CD14-positive monocyte (primary cell): ENCODE measurements at regions of chr12 and their contacts with region 1.

Region 1: GRCh38 chr12:4148418-4149056 is 125.0 kb upstream of the CCND2 start:
- DNase-seq: peak; percentile 87 to 95 (median 92)
- H3K4me3 ChIP-seq: no peak overlapping the region
- H3K4me3 Mint-ChIP-seq: peak overlapping the region in 1 of 2 donors; percentile 39
- H3K27ac ChIP-seq: no peak overlapping the region
- H3K27ac Mint-ChIP-seq: peak overlapping the region; percentile 61 to 84 (median 75)
- H3K4me1 ChIP-seq: peaks cover 44 to 49% of the 10 kb centered on the region in 2 donors
- H3K4me1 Mint-ChIP-seq: peaks cover 50% of the 10 kb centered on the region
- H3K27me3 ChIP-seq: no peaks in the 10 kb centered on the region
- H3K27me3 Mint-ChIP-seq: peaks cover 2 to 14% (median 2%) of the 10 kb centered on the region in 3 donors
- CTCF ChIP-seq: no peak

Region 2: GRCh38 chr12:4107436-4107878 is 41.1 kb before region 1 on chr12:
- intact Hi-C with region 1: loop called in 1 of 2 experiments (anchors 5 kb)
- DNase-seq: peak; percentile 82 to 93 (median 89)
- H3K4me3 ChIP-seq: peak overlapping the region in 1 of 3 experiments; percentile 54
- H3K4me3 Mint-ChIP-seq: peak overlapping the region; percentile 72 to 83
- H3K27ac ChIP-seq: no peak overlapping the region
- H3K27ac Mint-ChIP-seq: peak overlapping the region; percentile 7 to 85 (median 58)
- H3K4me1 ChIP-seq: peaks cover 16 to 20% of the 10 kb centered on the region in 2 donors
- H3K4me1 Mint-ChIP-seq: peaks cover 33% of the 10 kb centered on the region
- H3K27me3 ChIP-seq: peaks cover 0 to 4% of the 10 kb centered on the region in 2 donors
- H3K27me3 Mint-ChIP-seq: peaks cover 5 to 21% (median 12%) of the 10 kb centered on the region in 3 donors
- CTCF ChIP-seq: peak; percentile 83

Region 3: DNA sequence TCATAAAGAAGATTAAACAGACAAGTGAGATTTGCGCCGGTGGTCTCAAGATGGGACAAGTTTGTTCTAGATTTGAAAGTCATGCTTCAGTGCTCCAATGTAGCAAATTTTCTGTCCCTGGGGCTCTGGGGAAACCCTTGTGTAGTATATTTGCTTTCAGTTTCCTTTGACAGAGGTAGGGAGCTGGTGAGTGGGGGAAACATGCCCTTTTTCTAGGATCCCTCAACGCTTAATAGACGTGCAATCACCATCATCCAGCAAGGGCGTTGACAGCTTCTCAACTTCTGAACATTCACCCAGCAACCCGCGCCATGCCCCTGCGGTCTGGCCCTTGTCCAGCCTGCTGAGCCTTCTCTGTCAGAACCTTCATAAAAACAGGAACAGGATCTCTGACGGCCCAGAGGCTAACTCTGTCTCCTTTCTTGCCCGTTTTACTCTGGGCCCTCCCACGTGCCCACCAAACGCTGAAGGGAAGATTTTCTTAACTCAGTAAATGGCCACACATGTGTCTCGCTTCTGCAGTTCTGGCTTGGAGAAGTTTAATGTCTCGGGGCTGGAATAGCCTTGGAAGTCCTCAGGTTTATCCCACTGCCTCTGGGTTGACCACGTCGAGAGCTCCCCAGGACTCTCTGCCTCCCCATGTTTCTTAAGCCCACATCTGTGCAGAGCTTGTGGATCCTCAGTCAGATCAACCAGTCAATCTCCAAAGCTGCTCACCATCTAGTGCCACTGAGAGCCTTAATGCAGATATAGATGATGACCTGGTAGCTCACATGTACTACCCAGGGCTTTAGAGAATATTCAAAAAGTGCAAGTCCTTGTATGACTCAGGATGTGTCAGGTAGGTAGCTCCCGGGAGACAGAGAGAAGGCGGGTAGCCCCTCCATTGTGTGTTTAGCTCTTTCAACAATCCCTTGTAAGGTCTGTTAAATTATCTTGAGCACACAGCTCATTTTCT is 67.0 kb after region 1 on chr12:
- intact Hi-C with region 1: loop called (anchors 5 to 10 kb)
- DNase-seq: peak; percentile 96 to 97 (median 97)
- H3K4me3 ChIP-seq: peak overlapping the region; percentile 24 to 69 (median 28)
- H3K4me3 Mint-ChIP-seq: peak overlapping the region; percentile 71 to 89
- H3K27ac ChIP-seq: peak overlapping the region; percentile 83 to 97
- H3K27ac Mint-ChIP-seq: peak overlapping the region; percentile 96 to 99 (median 99)
- H3K4me1 ChIP-seq: peaks cover 56 to 58% of the 10 kb centered on the region in 2 donors
- H3K4me1 Mint-ChIP-seq: peaks cover 63% of the 10 kb centered on the region
- H3K27me3 ChIP-seq: no peaks in the 10 kb centered on the region
- H3K27me3 Mint-ChIP-seq: peaks cover 0 to 4% (median 2%) of the 10 kb centered on the region in 3 donors
- CTCF ChIP-seq: no peak

Region 4: DNA sequence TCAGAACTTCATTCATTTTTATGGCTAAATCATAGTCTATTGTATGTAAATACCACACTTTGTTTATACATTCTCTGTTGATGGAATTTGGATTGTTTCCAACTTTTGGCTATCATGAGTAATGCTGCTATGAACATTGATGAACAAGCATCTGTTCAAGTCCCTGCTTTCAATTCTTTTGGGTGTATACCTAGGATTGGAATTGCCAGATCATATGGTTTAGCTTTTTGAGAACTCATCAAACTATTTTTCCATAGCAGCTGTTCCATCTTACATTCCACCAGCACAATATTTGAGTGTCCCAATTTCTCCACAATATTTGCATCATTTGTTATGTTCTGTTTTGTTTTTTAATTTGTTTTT is 72.7 kb after region 1 on chr12:
- intact Hi-C with region 1: loop called (anchors 5 to 10 kb)
- DNase-seq: no peak
- H3K4me3 ChIP-seq: no peak overlapping the region
- H3K4me3 Mint-ChIP-seq: no peak overlapping the region
- H3K27ac ChIP-seq: no peak overlapping the region
- H3K27ac Mint-ChIP-seq: peak overlapping the region in 1 of 7 donors; percentile 62
- H3K4me1 ChIP-seq: peaks cover 53 to 65% of the 10 kb centered on the region in 2 donors
- H3K4me1 Mint-ChIP-seq: peaks cover 70% of the 10 kb centered on the region
- H3K27me3 ChIP-seq: no peaks in the 10 kb centered on the region
- H3K27me3 Mint-ChIP-seq: peaks cover 0 to 2% (median 0%) of the 10 kb centered on the region in 3 donors
- CTCF ChIP-seq: no peak

Region 5: GRCh38 chr12:4251216-4251891 is 102.8 kb after region 1 on chr12:
- intact Hi-C with region 1: no loop called
- DNase-seq: no peak
- H3K4me3 ChIP-seq: no peak overlapping the region
- H3K4me3 Mint-ChIP-seq: no peak overlapping the region
- H3K27ac ChIP-seq: no peak overlapping the region
- H3K27ac Mint-ChIP-seq: no peak overlapping the region
- H3K4me1 ChIP-seq: peaks cover 3% of the 10 kb centered on the region in 2 donors
- H3K4me1 Mint-ChIP-seq: peaks cover 3% of the 10 kb centered on the region
- H3K27me3 ChIP-seq: no peaks in the 10 kb centered on the region
- H3K27me3 Mint-ChIP-seq: peaks cover 7 to 13% (median 9%) of the 10 kb centered on the region in 3 donors
- CTCF ChIP-seq: no peak